Activated CD8-positive, alpha-beta T cell treated with anti-CD3 and anti-CD28 coated beads for 36 hours (primary cell): ENCODE measurements at regions of chr2 and their contacts with region 1.

Region 1: DNA sequence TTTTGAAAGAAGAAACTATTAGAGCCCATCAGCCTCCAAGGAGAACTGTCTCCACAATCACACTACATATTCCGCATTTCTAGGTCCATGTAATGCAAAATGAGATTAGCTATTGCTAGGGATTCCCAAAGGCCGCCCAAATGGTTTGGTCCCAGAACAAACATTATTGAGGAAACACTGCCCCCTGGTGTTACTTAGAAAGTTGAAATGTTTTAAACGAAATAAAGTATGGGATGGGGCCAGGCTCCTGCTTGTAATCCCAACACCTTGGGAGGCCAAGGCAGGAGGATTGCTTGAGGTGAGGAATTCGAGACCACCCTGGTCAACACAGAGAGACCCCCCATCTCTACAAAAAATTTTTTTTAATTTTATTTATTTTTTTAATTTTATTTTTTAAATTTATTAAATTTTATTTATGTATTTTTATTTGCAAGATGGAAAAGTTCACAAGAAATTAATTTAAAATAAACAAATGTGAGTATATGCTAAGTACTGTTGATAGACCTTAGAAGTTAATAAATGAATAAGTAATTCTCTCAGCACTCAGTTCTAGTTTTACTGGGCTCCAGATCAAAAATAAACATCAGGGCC is 5.5 kb downstream of the NHEJ1 start:
- DNase-seq: peak; percentile 36
- ATAC-seq: peak; percentile 37
- H3K4me3 Mint-ChIP-seq: no peak overlapping the region
- H3K27ac Mint-ChIP-seq: no peak overlapping the region
- H3K4me1 Mint-ChIP-seq: peaks cover 9% of the 10 kb centered on the region
- H3K27me3 Mint-ChIP-seq: no peaks in the 10 kb centered on the region
- CTCF ChIP-seq: peak; percentile 81

Region 2: GRCh38 chr2:219057709-219058540 is 97.2 kb before region 1 on chr2:
- CTCF ChIA-PET with region 1: interaction called, 192 read pairs
- POLR2A ChIA-PET with region 1: interaction called, 3 read pairs
- intact Hi-C with region 1: loop called (anchors 2 kb)
- DNase-seq: peak; percentile 84
- ATAC-seq: peak; percentile 97
- H3K4me3 Mint-ChIP-seq: peak overlapping the region; percentile 36
- H3K27ac Mint-ChIP-seq: no peak overlapping the region
- H3K4me1 Mint-ChIP-seq: peaks cover 19% of the 10 kb centered on the region
- H3K27me3 Mint-ChIP-seq: peaks cover 60% of the 10 kb centered on the region
- CTCF ChIP-seq: peak; percentile 97

Region 3: DNA sequence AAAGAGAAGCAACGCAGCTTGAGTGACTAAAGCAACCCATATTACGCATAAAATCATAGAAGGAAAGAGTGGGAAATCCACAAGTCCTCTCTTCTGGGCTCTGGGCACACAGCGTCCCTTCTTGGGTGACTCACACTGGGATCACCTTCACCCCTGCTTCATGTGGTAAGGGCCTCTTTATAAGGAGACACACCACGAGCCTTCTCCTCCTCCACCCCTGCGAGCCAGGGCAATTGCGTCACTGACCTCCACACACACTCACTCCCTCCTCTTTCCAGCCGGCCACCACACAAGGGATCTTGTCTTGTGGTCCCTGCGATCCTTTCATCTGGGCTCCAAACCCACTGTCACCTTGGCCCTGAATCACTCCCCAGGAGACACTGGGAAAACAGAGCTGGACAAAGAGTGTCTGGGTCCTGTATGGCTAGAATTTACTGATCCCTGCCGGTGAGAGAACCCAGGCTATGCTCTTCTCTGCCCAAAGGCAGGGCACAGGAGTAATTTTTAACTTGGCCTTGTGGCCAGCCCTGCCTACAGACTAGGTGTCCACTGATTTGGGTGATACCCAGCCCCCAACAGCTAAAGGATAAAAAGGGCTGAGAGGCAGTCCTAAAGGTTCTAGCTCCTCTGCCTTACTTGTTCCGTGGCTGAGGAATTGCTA is 29.8 kb before region 1 on chr2:
- CTCF ChIA-PET with region 1: interaction called, 11 read pairs
- POLR2A ChIA-PET with region 1: interaction called, 3 read pairs
- intact Hi-C with region 1: no loop called
- DNase-seq: peak; percentile 14
- ATAC-seq: peak; percentile 64
- H3K4me3 Mint-ChIP-seq: no peak overlapping the region
- H3K27ac Mint-ChIP-seq: no peak overlapping the region
- H3K4me1 Mint-ChIP-seq: peaks cover 23% of the 10 kb centered on the region
- H3K27me3 Mint-ChIP-seq: no peaks in the 10 kb centered on the region
- CTCF ChIP-seq: no peak

Region 4: GRCh38 chr2:219142329-219142728 is 12.8 kb before region 1 on chr2:
- CTCF ChIA-PET with region 1: interaction called, 25 read pairs
- POLR2A ChIA-PET with region 1: no interaction called
- intact Hi-C with region 1: no loop called
- DNase-seq: no peak
- ATAC-seq: no peak
- H3K4me3 Mint-ChIP-seq: no peak overlapping the region
- H3K27ac Mint-ChIP-seq: no peak overlapping the region
- H3K4me1 Mint-ChIP-seq: no peaks in the 10 kb centered on the region
- H3K27me3 Mint-ChIP-seq: no peaks in the 10 kb centered on the region
- CTCF ChIP-seq: no peak

Region 5: GRCh38 chr2:219352448-219353023 is 197.4 kb after region 1 on chr2:
- CTCF ChIA-PET with region 1: interaction called, 4 read pairs
- POLR2A ChIA-PET with region 1: no interaction called
- intact Hi-C with region 1: loop called (anchors 5 kb)
- DNase-seq: peak; percentile 89
- ATAC-seq: peak; percentile 95
- H3K4me3 Mint-ChIP-seq: no peak overlapping the region
- H3K27ac Mint-ChIP-seq: no peak overlapping the region
- H3K4me1 Mint-ChIP-seq: no peaks in the 10 kb centered on the region
- H3K27me3 Mint-ChIP-seq: peaks cover 43% of the 10 kb centered on the region
- CTCF ChIP-seq: peak; percentile 90

Region 6: DNA sequence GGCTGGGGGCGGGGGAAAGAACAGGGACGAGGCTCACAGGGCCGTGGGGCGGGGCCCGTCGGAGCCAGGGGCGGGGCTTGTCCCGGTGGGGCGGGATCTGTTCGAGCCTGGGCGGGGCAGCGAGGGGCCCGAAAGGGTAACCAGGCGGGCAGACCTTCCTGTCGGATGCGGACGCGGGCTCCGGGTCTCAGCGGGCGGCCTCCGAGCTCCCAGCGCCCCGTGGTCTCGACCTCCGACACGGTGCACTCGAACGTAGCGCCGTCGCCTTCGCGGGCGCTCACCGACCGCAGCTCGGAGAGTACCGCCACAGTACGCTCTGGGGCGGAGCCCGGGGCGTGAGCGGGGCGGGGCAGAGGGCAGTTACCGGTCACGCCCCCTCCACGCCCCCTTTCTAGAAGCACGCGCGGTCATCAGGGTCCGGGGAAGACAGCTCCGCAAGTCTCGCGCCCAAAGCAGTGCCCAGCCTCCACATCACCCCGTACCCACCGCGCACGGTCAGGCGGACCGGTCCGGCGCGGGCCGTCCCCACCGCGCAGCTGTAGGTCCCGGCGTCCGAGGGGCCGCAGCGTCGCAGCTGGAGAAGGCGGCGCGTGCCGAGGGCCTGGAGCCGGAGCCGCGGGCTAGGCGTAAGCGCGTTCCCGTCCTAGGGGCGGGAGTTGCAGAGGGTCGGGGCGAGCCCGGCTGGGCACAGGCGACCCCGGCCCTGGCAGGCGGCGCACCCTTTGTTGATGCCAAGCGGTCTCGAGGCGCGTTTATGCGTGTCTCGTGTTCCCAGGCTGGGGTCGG is 397.4 kb after region 1 on chr2:
- CTCF ChIA-PET with region 1: no interaction called
- POLR2A ChIA-PET with region 1: no interaction called
- intact Hi-C with region 1: no loop called
- DNase-seq: peak; percentile 87
- ATAC-seq: peak; percentile 92
- H3K4me3 Mint-ChIP-seq: peak overlapping the region; percentile 74
- H3K27ac Mint-ChIP-seq: no peak overlapping the region
- H3K4me1 Mint-ChIP-seq: no peaks in the 10 kb centered on the region
- H3K27me3 Mint-ChIP-seq: peaks cover 37% of the 10 kb centered on the region
- CTCF ChIP-seq: no peak